Colonic mucosa (tissue), 4 donors: ENCODE measurements at regions of chr4 and their contacts with region 1.

Region 1: GRCh38 chr4:56910172-56910967 is 2.7 kb downstream of the REST start:
- DNase-seq: no peak
- H3K4me3 ChIP-seq: no peak overlapping the region
- H3K27ac ChIP-seq: no peak overlapping the region
- H3K4me1 ChIP-seq: peaks cover 10% of the 10 kb centered on the region
- H3K27me3 ChIP-seq: no peaks in the 10 kb centered on the region
- CTCF ChIP-seq: no peak

Region 2: DNA sequence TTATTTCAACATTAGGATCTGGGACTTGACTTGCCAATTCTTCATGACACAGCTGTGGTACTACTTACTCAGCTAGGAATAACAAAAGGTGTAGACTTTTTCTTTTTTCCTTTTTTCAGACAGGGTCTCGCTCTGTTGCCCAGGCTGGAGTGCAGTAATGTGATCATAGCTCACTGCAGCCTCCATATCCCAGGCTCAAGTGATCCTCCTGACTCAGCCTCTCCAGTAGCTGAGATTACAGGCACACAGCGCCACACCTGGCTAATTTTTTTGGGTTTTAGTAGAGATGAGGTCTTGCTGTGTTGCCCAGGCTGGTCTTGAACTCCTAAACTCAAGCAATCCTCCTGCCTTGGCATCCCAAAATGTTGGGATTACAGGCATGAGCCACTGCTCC is 50.7 kb after region 1 on chr4:
- intact Hi-C with region 1: loop called (anchors 10 kb)
- DNase-seq: no peak
- H3K4me3 ChIP-seq: no peak overlapping the region
- H3K27ac ChIP-seq: no peak overlapping the region
- H3K4me1 ChIP-seq: no peaks in the 10 kb centered on the region
- H3K27me3 ChIP-seq: no peaks in the 10 kb centered on the region
- CTCF ChIP-seq: no peak